OCI-LY7 (cell line): ENCODE measurements at regions of chr7 and their contacts with region 1.

Region 1: GRCh38 chr7:128883622-128884501 is 21.2 kb downstream of the ATP6V1F start:
- DNase-seq: peak; percentile 90
- H3K4me3 ChIP-seq: peak overlapping the region; percentile 64
- H3K27ac ChIP-seq: peak overlapping the region; percentile 30
- H3K4me1 ChIP-seq: peaks cover 8% of the 10 kb centered on the region
- CTCF ChIP-seq: peak; percentile 100

Region 2: GRCh38 chr7:128791121-128791961 is 92.5 kb before region 1 on chr7:
- CTCF ChIA-PET with region 1: no interaction called
- POLR2A ChIA-PET with region 1: interaction called, 3 read pairs
- intact Hi-C with region 1: loop called (anchors 5 kb)
- DNase-seq: peak; percentile 86
- H3K4me3 ChIP-seq: peak overlapping the region; percentile 77
- H3K27ac ChIP-seq: no peak overlapping the region
- H3K4me1 ChIP-seq: peaks cover 16% of the 10 kb centered on the region
- CTCF ChIP-seq: no peak

Region 3: DNA sequence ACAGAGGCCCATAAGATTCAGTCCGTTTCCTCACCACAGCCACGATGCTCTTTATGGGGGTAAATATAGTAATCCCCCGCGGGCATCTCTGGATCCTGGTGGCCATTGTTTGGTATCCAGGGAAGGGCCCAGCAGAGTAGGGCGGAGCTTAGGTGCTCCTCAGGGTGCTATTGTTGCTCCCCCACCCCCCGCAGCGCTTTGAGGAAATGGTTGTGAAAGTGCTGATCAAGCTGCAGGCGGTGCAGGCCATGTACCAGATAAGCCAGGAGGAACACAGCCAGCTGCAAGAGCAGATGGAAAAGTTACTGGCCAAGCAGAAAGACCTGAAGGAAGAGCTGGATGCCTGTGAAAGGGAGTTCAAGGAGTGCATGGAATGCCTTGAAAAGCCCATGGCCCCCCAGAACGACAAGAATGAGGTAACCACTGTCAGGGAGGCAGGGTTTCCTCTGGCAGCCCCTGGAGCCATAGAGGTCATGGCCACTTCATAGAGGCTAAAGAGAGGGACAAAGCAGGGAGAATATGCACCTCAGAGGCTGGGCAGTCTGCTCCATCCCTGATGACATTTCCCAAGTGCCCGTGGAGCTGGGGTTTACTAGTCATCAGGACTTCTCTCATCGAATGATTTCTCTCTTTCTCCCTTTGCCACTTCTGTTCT is 71.2 kb before region 1 on chr7:
- CTCF ChIA-PET with region 1: no interaction called
- POLR2A ChIA-PET with region 1: no interaction called
- intact Hi-C with region 1: no loop called
- DNase-seq: no peak
- H3K4me3 ChIP-seq: no peak overlapping the region
- H3K27ac ChIP-seq: no peak overlapping the region
- H3K4me1 ChIP-seq: no peaks in the 10 kb centered on the region
- CTCF ChIP-seq: no peak

Region 4: GRCh38 chr7:128841921-128842651 is 41.8 kb before region 1 on chr7:
- CTCF ChIA-PET with region 1: no interaction called
- POLR2A ChIA-PET with region 1: no interaction called
- intact Hi-C with region 1: loop called (anchors 1 kb)
- DNase-seq: peak; percentile 66
- H3K4me3 ChIP-seq: no peak overlapping the region
- H3K27ac ChIP-seq: no peak overlapping the region
- H3K4me1 ChIP-seq: peaks cover 3% of the 10 kb centered on the region
- CTCF ChIP-seq: peak; percentile 92

Region 5: DNA sequence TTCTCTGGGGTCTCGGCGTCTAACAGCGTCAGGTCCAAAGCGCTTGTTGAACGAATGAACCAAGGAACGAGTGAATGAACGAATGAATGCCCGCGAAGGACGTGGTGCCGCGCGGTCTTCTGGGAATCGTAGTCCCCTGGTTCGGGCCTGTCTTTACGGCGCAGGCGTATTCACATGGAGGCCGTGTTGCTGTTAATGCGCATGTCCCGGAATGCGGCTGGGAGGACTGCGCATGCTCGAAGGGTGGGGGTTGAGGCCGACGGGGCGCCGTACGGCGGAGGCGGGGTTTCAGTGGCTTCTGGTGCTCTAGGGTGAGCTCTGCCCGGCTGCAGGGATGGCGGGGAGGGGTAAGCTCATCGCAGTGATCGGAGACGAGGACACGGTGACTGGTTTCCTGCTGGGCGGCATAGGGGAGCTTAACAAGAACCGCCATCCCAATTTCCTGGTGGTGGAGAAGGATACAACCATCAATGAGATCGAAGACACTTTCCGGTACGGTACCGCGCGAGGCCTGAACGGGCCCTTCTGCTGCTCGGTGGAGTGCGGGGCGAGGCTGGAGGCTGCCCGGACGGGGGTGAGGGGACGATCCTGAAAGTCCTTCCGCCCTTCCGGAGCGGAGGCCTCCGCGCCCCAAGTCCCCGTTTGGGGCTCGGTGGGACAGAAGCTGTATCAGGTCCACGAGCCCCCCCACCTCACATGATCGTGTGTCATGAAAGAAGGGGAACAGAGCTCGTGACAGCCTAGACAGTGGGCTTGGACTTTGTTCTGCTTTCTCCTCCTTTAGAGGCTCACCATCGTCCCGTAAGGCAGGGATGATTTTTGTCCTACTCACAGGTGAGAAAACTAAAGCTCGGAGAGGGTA is 21.1 kb before region 1 on chr7 and contains the start of gene ATP6V1F:
- CTCF ChIA-PET with region 1: interaction called, 11 read pairs
- POLR2A ChIA-PET with region 1: interaction called, 4 read pairs
- intact Hi-C with region 1: loop called (anchors 1 kb)
- DNase-seq: peak; percentile 98
- H3K4me3 ChIP-seq: peak within 1 kb of the TSS; percentile 83
- H3K27ac ChIP-seq: peak within 1 kb of the TSS; percentile 36
- H3K4me1 ChIP-seq: peaks cover 30% of the 10 kb centered on the region
- CTCF ChIP-seq: no peak
- total RNA-seq, gene ATP6V1F: 84.9 and 108 TPM in 2 replicates

Region 6: GRCh38 chr7:128937647-128938543 is 54.0 kb after region 1 on chr7 and contains the start of gene IRF5:
- CTCF ChIA-PET with region 1: no interaction called
- POLR2A ChIA-PET with region 1: no interaction called
- intact Hi-C with region 1: no loop called
- DNase-seq: no peak
- H3K4me3 ChIP-seq: peak within 1 kb of the TSS; percentile 37
- H3K27ac ChIP-seq: no peak within 1 kb of the TSS
- H3K4me1 ChIP-seq: peaks cover 56% of the 10 kb centered on the region
- CTCF ChIP-seq: no peak
- total RNA-seq, gene IRF5: 3.9 and 8.2 TPM in 2 replicates